ENCODE measurements at regions of chr20 and their contacts with region 1.

Region 1: DNA sequence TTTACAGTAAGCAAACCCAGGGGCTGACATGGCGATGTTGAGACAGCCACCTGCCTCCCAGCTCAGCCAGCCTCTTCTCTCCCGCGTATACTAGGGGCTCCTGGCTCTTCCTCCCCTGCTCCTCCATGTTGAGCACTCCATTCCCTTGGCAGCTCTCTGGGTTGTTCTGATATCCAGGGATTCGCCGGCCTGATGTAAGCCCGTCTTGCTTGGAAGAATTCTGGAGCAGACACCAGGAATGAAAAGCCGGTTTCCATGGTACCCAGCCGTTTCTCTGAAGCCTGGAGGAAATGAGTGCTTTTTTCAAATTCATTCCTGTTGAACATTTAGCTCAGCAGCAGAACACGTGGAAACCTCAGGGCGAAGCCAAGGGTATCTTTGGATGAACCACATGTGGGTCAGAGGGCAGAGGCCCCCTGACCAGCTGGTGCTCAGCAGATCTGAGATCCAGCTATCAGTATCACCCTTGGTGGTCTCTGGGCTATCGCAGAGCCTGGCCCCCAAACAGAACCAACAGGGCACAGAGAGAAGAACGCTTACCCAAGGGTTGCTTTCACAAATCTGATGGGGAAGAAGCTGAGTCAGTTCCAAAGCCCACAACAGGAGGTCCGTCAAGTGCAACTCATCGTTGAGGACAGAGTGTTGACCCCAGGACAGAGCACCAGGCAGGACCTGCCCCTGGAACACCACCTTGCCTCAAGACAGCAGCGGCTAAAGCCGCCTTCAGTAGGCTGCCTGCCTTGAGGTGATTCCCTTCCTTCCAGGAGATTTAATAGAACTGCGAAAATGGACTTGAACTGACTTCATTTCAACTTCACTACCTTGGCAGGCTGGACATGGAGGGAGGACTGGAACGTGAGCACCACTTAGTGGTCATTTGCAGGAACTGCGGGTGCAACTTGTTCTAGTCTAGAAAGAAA is 96.1 kb upstream of the RIN2 start:
- DNase-seq: peak; percentile 94
- H3K4me3 ChIP-seq: no peak overlapping the region
- H3K27ac ChIP-seq: no peak overlapping the region
- H3K4me1 ChIP-seq: peaks cover 4 to 8% (median 6%) of the 10 kb centered on the region in 4 donors
- H3K27me3 ChIP-seq: no peaks in the 10 kb centered on the region
- CTCF ChIP-seq: peak; percentile 96 to 99 (median 98)
- EP300 ChIP-seq: no peak
- POLR2A ChIP-seq: no peak

Region 2: DNA sequence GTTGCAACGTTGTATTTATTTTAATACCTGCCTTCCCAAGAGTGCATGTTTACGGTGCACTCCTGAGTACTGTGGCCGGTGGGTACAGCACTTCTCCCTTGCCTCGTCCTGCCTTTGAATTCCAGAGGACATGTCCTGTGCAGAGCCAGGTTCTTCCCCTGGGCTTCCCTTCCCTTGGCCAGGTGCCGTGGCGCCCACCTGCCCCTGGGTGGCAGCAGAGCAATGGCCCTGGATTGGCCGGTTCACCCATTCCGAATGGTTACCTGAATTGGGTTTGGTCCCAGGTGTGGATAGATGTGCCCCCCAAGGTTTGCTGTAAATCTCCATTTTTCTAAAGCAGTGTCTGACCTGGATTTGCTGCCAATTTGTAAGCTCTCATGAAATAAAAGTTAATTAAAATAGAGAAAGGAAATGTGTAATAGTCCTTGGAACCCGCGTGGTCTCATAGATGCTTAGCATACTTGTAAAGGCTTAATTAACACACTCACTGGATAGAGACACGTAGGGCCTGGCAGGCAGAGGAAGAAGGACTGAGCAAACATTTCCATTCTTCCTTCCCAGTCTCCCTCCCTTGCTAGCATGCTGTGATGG is 1033.6 kb before region 1 on chr20:
- intact Hi-C with region 1: loop called (anchors 10 kb)
- DNase-seq: no peak
- H3K4me3 ChIP-seq: no peak overlapping the region
- H3K27ac ChIP-seq: no peak overlapping the region
- H3K4me1 ChIP-seq: no peaks in the 10 kb centered on the region
- H3K27me3 ChIP-seq: no peaks in the 10 kb centered on the region
- CTCF ChIP-seq: peak in 1 of 3 experiments; percentile 38
- EP300 ChIP-seq: no peak
- POLR2A ChIP-seq: no peak

Region 3: DNA sequence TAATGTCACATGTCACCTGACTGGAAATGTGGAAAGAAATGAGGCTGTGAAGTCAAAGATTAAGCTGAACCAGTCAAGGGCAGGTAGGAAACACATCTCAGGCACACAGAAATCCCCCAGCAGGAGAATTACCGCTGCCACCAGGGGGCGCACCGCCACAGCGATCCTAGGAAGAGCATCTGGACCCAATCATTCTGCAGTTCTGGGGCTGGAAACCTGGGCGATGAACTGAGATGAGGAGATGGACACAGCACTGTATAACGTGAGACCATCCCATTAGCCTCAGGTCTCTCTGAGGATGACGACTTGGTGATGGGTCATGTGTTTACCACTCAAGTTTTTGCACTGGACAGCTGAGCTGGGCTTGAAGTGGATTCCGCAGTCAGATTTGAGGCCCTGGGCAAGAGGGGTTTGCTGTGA is 456.0 kb before region 1 on chr20:
- intact Hi-C with region 1: loop called (anchors 2 kb)
- DNase-seq: peak; percentile 96
- H3K4me3 ChIP-seq: no peak overlapping the region
- H3K27ac ChIP-seq: no peak overlapping the region
- H3K4me1 ChIP-seq: peaks cover 0 to 9% (median 6%) of the 10 kb centered on the region in 4 donors
- H3K27me3 ChIP-seq: no peaks in the 10 kb centered on the region
- CTCF ChIP-seq: peak; percentile 85 to 87 (median 86)
- EP300 ChIP-seq: no peak
- POLR2A ChIP-seq: no peak

Region 4: DNA sequence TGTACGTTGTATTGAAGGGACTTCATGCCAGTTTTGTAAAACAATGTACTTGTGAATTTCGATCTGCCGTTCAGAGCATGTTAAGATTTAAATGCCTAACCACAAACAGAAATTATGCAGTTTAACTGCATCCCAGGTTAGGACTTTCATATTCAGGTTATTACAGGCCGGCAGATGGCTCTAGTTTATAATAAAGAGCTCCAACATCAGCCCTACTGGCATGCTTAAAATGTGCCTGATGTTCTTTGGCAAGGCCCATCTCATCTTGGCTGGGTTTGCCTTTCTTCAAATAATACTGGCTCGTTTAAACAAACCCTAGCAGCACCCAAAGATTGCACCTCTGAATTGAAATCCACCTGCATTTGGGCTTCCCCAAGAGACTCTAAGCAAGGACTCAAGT is 73.2 kb before region 1 on chr20:
- intact Hi-C with region 1: loop called (anchors 2 kb)
- DNase-seq: no peak
- H3K4me3 ChIP-seq: no peak overlapping the region
- H3K27ac ChIP-seq: no peak overlapping the region
- H3K4me1 ChIP-seq: peaks cover 0 to 13% (median 11%) of the 10 kb centered on the region in 4 donors
- H3K27me3 ChIP-seq: no peaks in the 10 kb centered on the region
- CTCF ChIP-seq: peak; percentile 24 to 40 (median 31)
- EP300 ChIP-seq: no peak
- POLR2A ChIP-seq: no peak